ENCODE measurements at regions of chr3 and their contacts with region 1.

Region 1: DNA sequence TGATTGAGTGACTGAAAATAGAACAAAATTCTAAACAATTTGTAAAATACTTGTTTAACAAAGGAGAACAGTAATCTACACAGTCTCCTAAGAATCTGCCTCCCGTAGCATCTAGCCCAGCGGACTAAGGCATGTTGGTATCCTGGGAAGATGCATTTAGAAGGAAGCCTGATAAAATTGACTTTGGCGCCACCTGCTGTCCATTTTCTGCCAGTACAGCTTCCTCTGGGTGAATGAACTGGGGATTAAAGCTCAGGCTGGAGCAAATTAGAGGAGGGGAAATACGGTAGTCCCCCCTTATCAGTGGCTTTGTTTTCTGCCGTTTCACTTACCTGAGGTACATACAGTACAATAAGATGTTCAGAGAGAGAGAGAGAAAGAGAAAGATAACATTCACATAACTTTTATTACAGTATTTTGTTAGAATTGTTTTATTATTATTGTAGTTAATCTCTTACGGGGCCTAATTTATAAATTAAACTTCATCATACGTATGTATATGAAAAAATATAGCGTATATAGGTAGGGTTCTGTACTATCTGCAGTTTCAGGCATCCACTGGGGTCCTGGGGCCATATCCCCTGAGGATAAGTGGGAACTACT is 191.6 kb downstream of the GAP43 start:
- DNase-seq: peak; percentile 59
- ATAC-seq: peak; percentile 93
- H3K4me3 ChIP-seq: no peak overlapping the region
- H3K27ac ChIP-seq: no peak overlapping the region
- H3K4me1 ChIP-seq: no peaks in the 10 kb centered on the region
- H3K27me3 ChIP-seq: no peaks in the 10 kb centered on the region
- CTCF ChIP-seq: peak; percentile 71 to 94 (median 81); a peak in 5 of 6 replicates
- POLR2A ChIP-seq: no peak
- RAD21 ChIP-seq: peak; percentile 94

Region 2: GRCh38 chr3:115692887-115693524 is 121.9 kb before region 1 on chr3:
- CTCF ChIA-PET with region 1: interaction called, 10 read pairs
- POLR2A ChIA-PET with region 1: no interaction called
- RAD21 ChIA-PET with region 1: no interaction called
- intact Hi-C with region 1: loop called (anchors 2 kb)
- DNase-seq: peak; percentile 68
- ATAC-seq: peak; percentile 96
- H3K4me3 ChIP-seq: no peak overlapping the region
- H3K27ac ChIP-seq: no peak overlapping the region
- H3K4me1 ChIP-seq: peaks cover 0 to 11% of the 10 kb centered on the region in 2 experiments; a peak in 2 of 4 replicates
- H3K27me3 ChIP-seq: no peaks in the 10 kb centered on the region
- CTCF ChIP-seq: peak; percentile 74 to 95 (median 86)
- POLR2A ChIP-seq: no peak
- RAD21 ChIP-seq: peak; percentile 96

Region 3: DNA sequence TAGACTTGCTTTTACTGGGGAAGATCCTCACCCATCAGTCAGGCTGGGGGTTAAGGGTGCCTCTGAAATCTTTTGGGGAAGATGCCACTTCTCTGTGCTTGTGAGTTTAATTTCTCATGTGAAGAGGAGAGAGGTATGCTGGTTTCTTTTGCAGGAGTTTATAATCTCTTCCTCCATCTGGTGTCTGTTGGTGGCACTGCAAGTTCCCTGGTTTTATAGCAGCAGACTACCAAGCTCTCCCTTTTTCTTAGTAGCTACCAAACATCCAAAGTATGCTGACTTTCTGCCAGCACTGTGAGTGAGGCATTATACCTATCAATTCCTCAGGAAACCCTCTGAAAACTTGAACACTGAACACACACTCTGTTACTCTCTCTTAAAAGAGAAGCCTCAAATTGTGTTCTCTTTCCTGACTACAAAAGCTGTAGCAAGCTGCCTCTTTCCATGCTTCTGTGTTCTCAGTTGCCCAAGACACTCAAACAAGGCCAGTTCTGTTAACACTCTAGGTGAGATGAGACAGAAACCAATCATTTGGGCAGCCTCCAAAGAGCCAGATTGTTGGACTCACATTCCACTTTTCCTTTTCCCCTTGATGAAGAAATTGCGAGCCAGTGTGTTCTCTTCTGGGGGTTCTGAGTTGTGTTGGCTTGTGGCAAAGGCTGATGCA is 107.9 kb after region 1 on chr3:
- CTCF ChIA-PET with region 1: no interaction called
- POLR2A ChIA-PET with region 1: no interaction called
- RAD21 ChIA-PET with region 1: no interaction called
- intact Hi-C with region 1: no loop called
- DNase-seq: peak; percentile 12
- ATAC-seq: peak; percentile 82
- H3K4me3 ChIP-seq: no peak overlapping the region
- H3K27ac ChIP-seq: no peak overlapping the region
- H3K4me1 ChIP-seq: no peaks in the 10 kb centered on the region
- H3K27me3 ChIP-seq: peaks cover 15% of the 10 kb centered on the region; the same call in 1 of the 2 replicates
- CTCF ChIP-seq: peak; percentile 21 to 60 (median 54); a peak in 4 of 6 replicates
- POLR2A ChIP-seq: no peak
- RAD21 ChIP-seq: peak; percentile 30; the same call in 1 of the 2 replicates

Measured in HCT116 (cell line).